Right ventricle myocardium superior (tissue), 1 donor: ENCODE measurements at regions of chr16 and their contacts with region 1.

Region 1: GRCh38 chr16:7332611-7333010 is at the start of gene RBFOX1:
- DNase-seq: no peak
- ATAC-seq: peak; percentile 60
- total RNA-seq, gene RBFOX1: 70.2 TPM

Region 2: DNA sequence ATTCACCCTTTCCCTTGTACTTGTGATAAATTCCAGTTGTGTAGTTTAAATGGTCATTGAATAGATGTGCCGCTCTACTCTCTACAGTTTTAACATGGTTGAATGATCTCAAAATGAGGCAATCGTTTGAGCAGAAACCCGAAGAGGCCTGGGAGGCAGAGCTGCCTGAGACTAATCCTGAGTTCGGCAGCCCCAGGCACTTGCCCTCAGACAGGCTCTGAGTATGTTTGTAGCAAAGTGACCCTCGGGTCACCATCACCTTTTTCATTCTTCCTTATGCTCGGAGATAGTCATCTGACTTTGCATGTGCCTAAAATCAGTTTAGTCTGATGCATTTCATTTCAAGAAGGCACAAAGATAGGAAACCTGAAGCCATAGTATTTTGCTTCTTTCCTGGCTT is 184.0 kb before region 1 on chr16:
- intact Hi-C with region 1: no loop called
- DNase-seq: no peak
- ATAC-seq: no peak

Region 3: DNA sequence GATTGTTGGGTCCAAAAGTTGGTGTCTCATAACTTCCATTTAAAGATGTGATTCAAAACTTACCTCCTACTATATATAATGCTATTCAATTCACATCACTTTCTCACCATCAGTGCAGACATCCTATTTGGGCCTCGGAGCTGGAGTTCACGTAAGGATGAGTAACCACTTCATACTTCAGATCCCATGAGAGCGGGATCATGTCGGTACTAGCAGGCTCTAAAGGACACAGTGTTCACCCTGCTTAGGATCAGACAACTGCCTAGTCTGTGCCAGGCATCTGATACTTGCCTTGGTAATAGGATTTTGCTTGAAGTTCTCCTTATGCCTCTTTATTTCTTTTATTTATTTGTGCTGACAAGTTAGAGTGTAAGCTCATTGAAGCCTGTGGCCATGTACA is 39.5 kb after region 1 on chr16:
- intact Hi-C with region 1: loop called (anchors 5 kb)
- DNase-seq: no peak
- ATAC-seq: peak; percentile 79